Naive thymus-derived CD4-positive, alpha-beta T cell (primary cell): ENCODE measurements at regions of chr16 and their contacts with region 1.

Region 1: DNA sequence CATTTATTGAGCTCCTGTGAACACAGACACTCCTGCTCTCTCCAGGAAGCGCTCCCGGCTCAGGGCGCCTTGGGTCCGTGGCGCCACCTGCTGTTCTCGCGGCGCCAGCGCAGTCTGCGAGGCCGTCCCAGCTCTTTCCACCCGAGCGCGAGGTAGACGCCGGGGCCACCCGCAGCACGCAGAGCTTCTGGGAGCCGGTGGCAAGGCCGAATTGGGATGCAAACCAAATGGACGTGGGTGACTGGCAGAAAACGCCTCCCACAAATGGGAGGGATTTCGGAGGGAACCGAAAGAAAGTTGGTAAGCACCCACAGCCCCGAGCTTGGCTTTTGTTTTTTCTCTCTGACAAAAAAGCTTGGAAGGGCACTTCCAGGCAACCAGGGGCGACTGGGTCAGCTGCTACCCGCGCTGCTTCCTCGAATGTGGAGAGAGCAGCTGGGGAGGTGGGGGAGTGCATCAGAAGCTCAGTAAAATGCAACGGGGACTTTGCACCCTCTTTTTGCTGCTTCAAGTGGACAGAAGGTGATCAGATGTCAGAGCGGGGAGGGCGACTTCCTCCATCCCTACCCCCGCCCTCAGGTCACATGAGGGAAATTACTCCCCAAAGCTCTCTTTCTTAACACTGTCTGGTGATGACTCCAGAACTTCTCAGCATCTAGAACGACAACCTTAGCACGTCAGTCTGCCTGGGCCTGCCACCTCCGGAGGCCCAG is 13.5 kb upstream of the N4BP1 start:
- DNase-seq: peak; percentile 70 to 90 (median 82)
- ATAC-seq: peak; percentile 97
- H3K4me3 ChIP-seq: peak overlapping the region; percentile 34
- H3K4me3 Mint-ChIP-seq: peak overlapping the region; percentile 82 to 95 (median 86)
- H3K27ac ChIP-seq: peak overlapping the region; percentile 42
- H3K27ac Mint-ChIP-seq: peak overlapping the region; percentile 59 to 93 (median 79)
- H3K4me1 ChIP-seq: peaks cover 0 to 23% of the 10 kb centered on the region in 2 donors
- H3K4me1 Mint-ChIP-seq: peaks cover 14 to 39% (median 33%) of the 10 kb centered on the region in 7 donors
- H3K27me3 ChIP-seq: no peaks in the 10 kb centered on the region
- H3K27me3 Mint-ChIP-seq: peaks cover 0 to 7% (median 0%) of the 10 kb centered on the region in 5 donors

Region 2: DNA sequence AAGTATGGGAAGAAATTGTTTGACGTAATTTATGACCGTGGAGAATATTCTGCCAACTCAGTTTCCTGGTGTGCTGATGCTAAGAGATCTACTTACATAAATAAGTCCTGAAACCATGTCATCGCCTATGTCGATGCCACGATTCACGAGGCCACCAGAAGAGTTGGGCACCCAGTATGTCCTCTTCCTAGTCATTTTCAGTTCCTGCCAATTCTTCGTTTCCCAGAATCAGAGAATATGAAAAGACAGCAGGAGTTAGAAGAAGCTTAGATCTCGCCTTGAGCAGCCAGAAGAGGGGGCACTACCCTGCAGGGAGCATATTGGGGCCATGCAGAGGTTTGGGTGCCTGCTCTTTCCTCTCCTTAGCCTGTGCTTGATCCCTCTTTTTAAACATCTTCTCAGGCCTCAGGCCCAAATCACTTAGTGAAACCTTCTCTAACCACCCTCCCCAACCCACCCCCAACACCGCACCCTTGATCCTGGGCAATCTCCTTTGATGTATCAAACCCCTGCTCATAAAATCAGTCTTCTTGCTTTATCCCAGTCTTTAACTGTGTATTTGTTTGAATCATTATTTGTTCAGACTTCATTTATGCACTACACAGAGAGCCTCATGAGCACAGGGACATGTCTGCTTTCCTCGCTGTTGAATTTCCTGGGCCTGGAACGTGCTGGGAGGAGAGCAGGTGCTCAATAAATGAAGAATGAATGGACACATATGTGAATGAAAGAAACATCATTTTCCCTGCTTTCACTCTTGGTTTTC is 391.6 kb before region 1 on chr16:
- CTCF ChIA-PET with region 1: interaction called, 5 read pairs
- POLR2A ChIA-PET with region 1: no interaction called
- intact Hi-C with region 1: loop called in 1 of 2 experiments (anchors 2 kb)
- DNase-seq: peak in 4 of 9 donors; percentile 3 to 25 (median 15)
- ATAC-seq: peak; percentile 63
- H3K4me3 ChIP-seq: no peak overlapping the region
- H3K4me3 Mint-ChIP-seq: no peak overlapping the region
- H3K27ac ChIP-seq: no peak overlapping the region
- H3K27ac Mint-ChIP-seq: peak overlapping the region in 3 of 9 donors; percentile 31 to 62 (median 56)
- H3K4me1 ChIP-seq: no peaks in the 10 kb centered on the region
- H3K4me1 Mint-ChIP-seq: peaks cover 0 to 21% (median 0%) of the 10 kb centered on the region in 7 donors
- H3K27me3 ChIP-seq: no peaks in the 10 kb centered on the region
- H3K27me3 Mint-ChIP-seq: peaks cover 6 to 10% (median 7%) of the 10 kb centered on the region in 5 donors

Region 3: DNA sequence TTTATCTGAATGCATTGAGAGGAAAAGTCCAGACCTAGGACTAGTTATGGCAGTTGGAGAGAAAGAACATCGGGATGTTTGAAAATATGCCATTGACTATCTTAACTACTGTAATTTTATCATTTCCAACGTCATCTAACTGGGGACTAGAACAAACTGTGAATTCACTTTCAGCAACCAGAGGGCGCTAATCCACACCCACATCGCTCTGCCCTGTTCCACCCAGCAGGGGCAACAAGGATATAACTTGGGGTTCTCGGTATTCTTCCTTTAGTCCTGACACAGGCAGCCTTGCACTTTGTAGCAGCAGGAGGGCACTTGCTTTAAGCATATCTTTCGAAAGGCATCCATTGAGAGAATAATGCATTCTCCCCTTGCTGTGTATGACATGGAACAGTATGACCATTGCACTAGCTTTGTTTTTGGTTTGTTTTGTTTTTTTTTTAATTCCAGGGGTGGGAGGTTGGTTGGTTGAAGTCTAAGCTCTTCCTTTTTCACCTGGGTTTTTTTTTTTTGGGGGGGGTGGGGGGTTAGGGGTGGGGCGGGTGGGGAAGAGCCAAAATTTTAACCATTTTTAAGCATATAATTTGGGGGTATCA is 269.8 kb before region 1 on chr16:
- CTCF ChIA-PET with region 1: interaction called, 89 read pairs
- POLR2A ChIA-PET with region 1: interaction called, 5 read pairs
- intact Hi-C with region 1: loop called (anchors 1 kb)
- DNase-seq: peak; percentile 36 to 82 (median 77)
- ATAC-seq: peak; percentile 98
- H3K4me3 ChIP-seq: no peak overlapping the region
- H3K4me3 Mint-ChIP-seq: peak overlapping the region in 1 of 10 donors; percentile 16
- H3K27ac ChIP-seq: no peak overlapping the region
- H3K27ac Mint-ChIP-seq: peak overlapping the region; percentile 14 to 89 (median 74)
- H3K4me1 ChIP-seq: no peaks in the 10 kb centered on the region
- H3K4me1 Mint-ChIP-seq: peaks cover 6 to 20% (median 13%) of the 10 kb centered on the region in 7 donors
- H3K27me3 ChIP-seq: no peaks in the 10 kb centered on the region
- H3K27me3 Mint-ChIP-seq: no peaks in the 10 kb centered on the region

Region 4: GRCh38 chr16:48385272-48386150 is 237.9 kb before region 1 on chr16 and contains the start of gene SIAH1:
- CTCF ChIA-PET with region 1: interaction called, 5 read pairs
- POLR2A ChIA-PET with region 1: interaction called, 5 read pairs
- intact Hi-C with region 1: loop called (anchors 1 to 2 kb)
- DNase-seq: peak; percentile 79 to 95 (median 89)
- ATAC-seq: peak; percentile 95
- H3K4me3 ChIP-seq: peak within 1 kb of the TSS; percentile 88
- H3K4me3 Mint-ChIP-seq: peak within 1 kb of the TSS; percentile 90 to 98 (median 94)
- H3K27ac ChIP-seq: peak within 1 kb of the TSS; percentile 94
- H3K27ac Mint-ChIP-seq: peak within 1 kb of the TSS; percentile 80 to 97 (median 94)
- H3K4me1 ChIP-seq: peaks cover 12 to 16% of the 10 kb centered on the region in 2 donors
- H3K4me1 Mint-ChIP-seq: peaks cover 18 to 39% (median 31%) of the 10 kb centered on the region in 7 donors
- H3K27me3 ChIP-seq: no peaks in the 10 kb centered on the region
- H3K27me3 Mint-ChIP-seq: peaks cover 0 to 5% (median 0%) of the 10 kb centered on the region in 5 donors
- total RNA-seq, gene SIAH1: 14.5 to 51.1 (median 19.8) TPM

Region 5: DNA sequence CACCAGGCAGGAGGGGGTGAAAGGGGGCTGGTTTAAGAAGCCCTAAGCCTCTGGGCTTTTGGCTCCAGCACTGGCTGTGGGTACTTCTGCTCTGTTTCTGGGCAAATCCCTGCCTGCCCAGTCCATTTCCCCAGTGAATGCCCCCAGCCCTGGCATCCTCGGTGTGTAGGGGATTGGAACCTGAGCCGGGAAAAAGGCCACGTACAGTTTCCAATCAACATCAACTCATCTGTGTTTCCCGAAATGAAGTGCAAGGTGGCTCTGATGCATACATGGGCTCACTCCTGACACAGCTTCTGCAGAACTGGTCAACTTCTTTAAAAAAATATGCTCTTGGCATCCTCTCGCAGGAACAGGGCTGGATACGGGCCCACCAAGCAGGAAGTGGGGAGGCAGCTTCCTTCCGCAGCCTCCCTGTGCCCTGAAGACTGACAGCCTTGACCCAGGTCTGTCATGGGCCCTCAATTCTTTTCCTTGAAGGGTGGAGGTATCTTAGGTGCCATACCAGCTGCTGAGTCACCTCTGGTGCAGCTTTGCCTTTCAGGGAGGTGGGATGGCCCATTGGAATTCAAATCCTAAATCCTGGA is 86.8 kb before region 1 on chr16:
- CTCF ChIA-PET with region 1: interaction called, 12 read pairs
- POLR2A ChIA-PET with region 1: no interaction called
- intact Hi-C with region 1: loop called (anchors 1 to 2 kb)
- DNase-seq: no peak
- ATAC-seq: peak; percentile 48
- H3K4me3 ChIP-seq: no peak overlapping the region
- H3K4me3 Mint-ChIP-seq: peak overlapping the region in 4 of 10 donors; percentile 25 to 48 (median 31)
- H3K27ac ChIP-seq: no peak overlapping the region
- H3K27ac Mint-ChIP-seq: peak overlapping the region in 8 of 9 donors; percentile 24 to 84 (median 46)
- H3K4me1 ChIP-seq: peaks cover 2 to 15% of the 10 kb centered on the region in 2 donors
- H3K4me1 Mint-ChIP-seq: peaks cover 12 to 25% (median 19%) of the 10 kb centered on the region in 7 donors
- H3K27me3 ChIP-seq: no peaks in the 10 kb centered on the region
- H3K27me3 Mint-ChIP-seq: no peaks in the 10 kb centered on the region

Region 6: GRCh38 chr16:48556913-48557351 is 66.5 kb before region 1 on chr16:
- CTCF ChIA-PET with region 1: interaction called, 9 read pairs
- POLR2A ChIA-PET with region 1: interaction called, 5 read pairs
- intact Hi-C with region 1: loop called (anchors 1 to 2 kb)
- DNase-seq: no peak
- ATAC-seq: peak; percentile 63
- H3K4me3 ChIP-seq: no peak overlapping the region
- H3K4me3 Mint-ChIP-seq: peak overlapping the region in 6 of 10 donors; percentile 12 to 78 (median 30)
- H3K27ac ChIP-seq: no peak overlapping the region
- H3K27ac Mint-ChIP-seq: peak overlapping the region in 7 of 9 donors; percentile 0 to 84 (median 63)
- H3K4me1 ChIP-seq: peaks cover 19 to 24% of the 10 kb centered on the region in 2 donors
- H3K4me1 Mint-ChIP-seq: peaks cover 45 to 92% (median 80%) of the 10 kb centered on the region in 7 donors
- H3K27me3 ChIP-seq: no peaks in the 10 kb centered on the region
- H3K27me3 Mint-ChIP-seq: no peaks in the 10 kb centered on the region